Aorta (tissue), 5 donors: ENCODE measurements at regions of chr10 and their contacts with region 1.

Region 1: GRCh38 chr10:51001587-51001986 is 72.7 kb upstream of the PRKG1 start:
- DNase-seq: no peak
- ATAC-seq: peak; percentile 62
- H3K4me3 ChIP-seq: no peak overlapping the region
- H3K27ac ChIP-seq: peak overlapping the region in 1 of 2 donors; percentile 67
- H3K4me1 ChIP-seq: peaks cover 4 to 7% of the 10 kb centered on the region in 2 donors
- H3K27me3 ChIP-seq: no peaks in the 10 kb centered on the region

Region 2: DNA sequence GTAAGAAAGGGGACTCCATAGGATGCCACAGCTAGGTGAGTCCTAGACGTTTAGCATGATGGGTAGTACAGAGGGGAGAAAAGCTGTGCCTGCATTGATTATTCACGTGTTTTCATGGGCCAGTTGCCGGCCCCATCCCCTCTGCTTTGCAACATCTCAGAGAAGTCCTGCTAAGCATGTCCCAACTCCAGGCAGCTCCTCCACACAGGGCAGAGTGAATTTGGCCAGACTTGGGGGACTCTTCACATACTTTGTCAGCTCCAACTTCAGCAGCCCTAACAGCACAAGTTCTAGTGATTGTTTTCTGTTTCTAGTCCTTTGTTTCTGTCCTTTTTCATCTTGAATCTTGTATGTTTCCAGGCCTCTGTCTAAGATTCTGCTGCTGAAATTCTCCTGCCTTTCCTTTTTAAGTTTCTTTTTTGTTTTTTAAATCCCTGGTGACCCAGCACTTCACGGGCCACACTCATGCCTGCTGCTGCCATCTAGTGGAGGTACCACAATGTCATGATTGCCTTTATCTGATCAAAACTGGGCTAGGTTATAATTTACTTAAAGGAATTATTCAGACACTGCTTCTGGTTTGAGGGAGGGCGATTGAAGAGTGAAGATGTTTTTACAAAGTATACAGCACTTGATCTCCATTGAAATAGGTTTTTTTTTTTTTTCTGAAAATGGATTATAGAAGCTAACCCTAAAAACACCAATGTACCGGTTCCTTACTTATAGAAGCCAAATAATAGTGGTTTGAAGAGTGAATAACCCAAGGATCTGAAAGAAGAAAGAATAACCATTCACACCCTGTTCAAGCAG is 420.9 kb after region 1 on chr10:
- intact Hi-C with region 1: loop called in 1 of 2 experiments (anchors 10 kb)
- DNase-seq: peak; percentile 58 to 77
- ATAC-seq: peak; percentile 78
- H3K4me3 ChIP-seq: no peak overlapping the region
- H3K27ac ChIP-seq: peak overlapping the region; percentile 16 to 85
- H3K4me1 ChIP-seq: peaks cover 9 to 23% of the 10 kb centered on the region in 2 donors
- H3K27me3 ChIP-seq: no peaks in the 10 kb centered on the region